ENCODE measurements at regions of chr1 and their contacts with region 1.

Region 1: GRCh38 chr1:66924756-66925557 is at the starts of genes DNAI4 and MIER1:
- DNase-seq: peak; percentile 99
- ATAC-seq: peak; percentile 96
- H3K4me3 Mint-ChIP-seq: peak within 1 kb of the TSS; percentile 95
- H3K27ac Mint-ChIP-seq: peak within 1 kb of the TSS; percentile 96
- H3K4me1 Mint-ChIP-seq: peaks cover 46% of the 10 kb centered on the region
- H3K27me3 Mint-ChIP-seq: no peaks in the 10 kb centered on the region
- total RNA-seq, gene DNAI4: 1.4 to 3.6 TPM
- total RNA-seq, gene MIER1: 49.3 to 54.1 TPM

Region 2: GRCh38 chr1:66764994-66765578 is 159.9 kb before region 1 on chr1:
- CTCF ChIA-PET with region 1: interaction called, 12 read pairs
- POLR2A ChIA-PET with region 1: no interaction called
- DNase-seq: peak; percentile 72
- ATAC-seq: peak; percentile 63
- H3K4me3 Mint-ChIP-seq: no peak overlapping the region
- H3K27ac Mint-ChIP-seq: no peak overlapping the region
- H3K4me1 Mint-ChIP-seq: peaks cover 18% of the 10 kb centered on the region
- H3K27me3 Mint-ChIP-seq: peaks cover 5% of the 10 kb centered on the region